ENCODE measurements at regions of chr11 and their contacts with region 1.

Region 1: DNA sequence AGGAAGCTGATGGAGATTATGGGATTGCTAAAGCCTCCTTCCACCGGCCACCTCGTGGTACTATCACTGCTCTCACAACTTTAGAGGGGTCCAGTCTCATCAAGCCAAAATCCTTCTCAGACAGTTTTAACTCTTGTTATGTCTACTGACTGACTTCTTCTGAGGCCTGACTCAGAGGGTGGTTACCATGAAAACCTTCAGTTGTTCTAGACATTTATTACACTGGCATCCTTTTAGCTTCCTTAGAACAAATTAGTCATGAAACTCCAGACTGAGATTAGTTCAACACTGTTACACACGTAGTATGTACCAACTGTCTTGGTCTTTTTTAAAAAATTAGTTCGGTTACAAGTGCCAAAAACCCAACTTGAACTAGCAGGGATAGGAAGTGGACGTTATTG is 7.5 kb downstream of the DIXDC1 start:
- DNase-seq: no peak
- ATAC-seq: peak in 2 of 8 donors; percentile 13 to 21
- H3K4me3 ChIP-seq: no peak overlapping the region
- H3K27ac ChIP-seq: peak overlapping the region in 5 of 10 donors; percentile 6 to 71 (median 29)
- H3K4me1 ChIP-seq: peaks cover 0 to 58% (median 17%) of the 10 kb centered on the region in 9 donors
- H3K27me3 ChIP-seq: no peaks in the 10 kb centered on the region
- CTCF ChIP-seq: no peak

Region 2: GRCh38 chr11:110490886-110491285 is 1453.8 kb before region 1 on chr11:
- intact Hi-C with region 1: no loop called
- DNase-seq: no peak
- ATAC-seq: peak in 1 of 8 donors; percentile 85
- H3K4me3 ChIP-seq: no peak overlapping the region
- H3K27ac ChIP-seq: peak overlapping the region in 1 of 10 donors; percentile 8
- H3K4me1 ChIP-seq: peaks cover 0 to 22% (median 0%) of the 10 kb centered on the region in 9 donors
- H3K27me3 ChIP-seq: peaks cover 0 to 3% (median 0%) of the 10 kb centered on the region in 7 donors
- CTCF ChIP-seq: no peak

Region 3: GRCh38 chr11:111982019-111982464 is 37.4 kb after region 1 on chr11:
- intact Hi-C with region 1: loop called in 5 of 10 experiments (anchors 5 kb)
- DNase-seq: peak in 1 of 2 donors; percentile 40
- ATAC-seq: peak in 7 of 8 donors; percentile 51 to 65 (median 55)
- H3K4me3 ChIP-seq: no peak overlapping the region
- H3K27ac ChIP-seq: peak overlapping the region in 6 of 10 donors; percentile 49 to 71 (median 62)
- H3K4me1 ChIP-seq: peaks cover 9 to 63% (median 35%) of the 10 kb centered on the region in 9 donors
- H3K27me3 ChIP-seq: peaks cover 0 to 21% (median 0%) of the 10 kb centered on the region in 7 donors
- CTCF ChIP-seq: peak; percentile 30 to 73 (median 56)

Measured in heart right ventricle (tissue), 16 donors.